Activated naive CD4-positive, alpha-beta T cell treated with anti-CD3 and anti-CD28 coated beads for 36 hours (primary cell): ENCODE measurements at regions of chr12 and their contacts with region 1.

Region 1: DNA sequence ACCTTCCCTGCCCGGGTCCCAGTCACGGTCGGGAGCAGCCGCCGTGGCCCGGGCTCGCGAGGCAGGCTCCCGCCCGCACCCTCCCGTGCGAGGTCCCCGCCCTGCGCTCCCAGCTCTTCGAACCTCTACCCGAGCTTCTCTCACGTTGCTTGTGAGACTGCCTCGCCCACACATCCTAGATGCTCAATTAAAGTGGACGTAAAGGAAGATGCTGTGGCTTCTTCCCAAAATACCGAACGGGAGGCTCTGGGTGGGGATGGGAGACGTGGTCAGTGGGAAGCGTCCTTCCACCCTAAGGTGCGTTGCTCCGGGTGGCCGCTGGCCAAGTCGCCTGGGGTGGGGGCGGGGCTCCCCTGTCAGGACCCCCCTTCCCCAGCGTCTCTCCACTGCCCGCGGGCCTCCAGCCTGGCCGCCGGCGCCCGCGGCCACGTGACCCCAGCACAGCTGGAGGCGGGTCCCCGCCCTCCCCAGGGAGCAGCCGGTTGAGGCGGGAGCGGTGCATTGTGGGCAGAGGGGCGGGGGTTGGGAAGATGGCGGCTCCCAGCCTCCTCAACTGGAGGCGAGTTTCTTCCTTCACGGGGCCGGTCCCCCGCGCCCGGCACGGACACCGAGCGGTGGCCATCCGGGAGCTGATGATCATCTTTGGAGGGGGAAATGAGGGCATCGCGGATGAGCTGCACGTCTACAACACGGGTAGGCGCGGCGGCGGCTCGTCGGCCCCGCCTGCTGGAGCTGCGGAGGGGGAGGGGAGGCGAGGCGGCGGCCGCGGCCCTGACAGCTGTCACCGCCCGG is at the start of gene HCFC2:
- DNase-seq: peak; percentile 91
- H3K4me3 Mint-ChIP-seq: peak within 1 kb of the TSS; percentile 93
- H3K27ac Mint-ChIP-seq: peak within 1 kb of the TSS; percentile 84
- H3K4me1 Mint-ChIP-seq: peaks cover 16% of the 10 kb centered on the region
- H3K27me3 Mint-ChIP-seq: peaks cover 16% of the 10 kb centered on the region
- total RNA-seq, gene HCFC2: 7.4 to 8.3 TPM

Region 2: DNA sequence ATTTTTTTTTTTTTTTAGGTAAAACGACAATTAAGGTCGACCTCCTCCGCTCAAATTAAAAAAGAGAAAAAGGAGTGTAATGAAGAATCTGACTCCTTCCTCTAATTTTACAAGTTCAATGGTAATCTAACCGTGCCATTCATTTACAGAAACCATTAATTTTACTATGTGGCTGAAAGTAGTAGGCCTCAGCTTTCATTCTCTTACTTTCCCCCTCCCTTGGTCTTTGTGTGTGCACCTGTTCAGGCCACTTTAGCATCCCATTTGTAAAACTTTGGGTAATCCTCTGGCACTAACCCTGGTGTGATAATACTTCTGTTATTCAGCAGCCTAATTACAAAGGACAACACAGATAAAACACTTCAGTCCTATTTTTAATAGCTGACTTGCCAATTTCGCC is 978.7 kb before region 1 on chr12:
- CTCF ChIA-PET with region 1: no interaction called
- intact Hi-C with region 1: no loop called
- DNase-seq: no peak
- H3K4me3 Mint-ChIP-seq: no peak overlapping the region
- H3K27ac Mint-ChIP-seq: no peak overlapping the region
- H3K4me1 Mint-ChIP-seq: no peaks in the 10 kb centered on the region
- H3K27me3 Mint-ChIP-seq: no peaks in the 10 kb centered on the region

Region 3: DNA sequence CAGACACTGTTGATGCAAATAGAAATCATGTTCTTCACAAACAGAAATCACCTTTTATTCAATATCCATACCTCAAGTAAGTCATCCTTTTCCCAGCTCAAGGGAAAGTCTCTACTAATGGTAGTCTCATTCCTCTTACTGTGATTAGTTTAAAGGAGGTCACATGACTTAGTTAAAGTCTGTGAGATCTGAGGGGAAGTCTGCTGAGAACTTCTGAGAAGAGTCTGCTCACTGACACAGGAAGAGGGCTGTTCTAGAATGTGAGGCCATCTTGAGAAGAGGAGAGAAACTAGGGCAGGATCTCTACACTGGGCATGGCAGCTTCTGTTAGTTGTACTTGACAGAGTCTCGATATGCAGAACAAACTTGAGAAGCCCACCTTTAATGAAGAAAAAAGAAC is 715.3 kb before region 1 on chr12:
- CTCF ChIA-PET with region 1: no interaction called
- intact Hi-C with region 1: no loop called
- DNase-seq: peak; percentile 12
- H3K4me3 Mint-ChIP-seq: no peak overlapping the region
- H3K27ac Mint-ChIP-seq: no peak overlapping the region
- H3K4me1 Mint-ChIP-seq: peaks cover 6% of the 10 kb centered on the region
- H3K27me3 Mint-ChIP-seq: no peaks in the 10 kb centered on the region

Region 4: GRCh38 chr12:103688376-103689063 is 375.7 kb before region 1 on chr12:
- CTCF ChIA-PET with region 1: no interaction called
- intact Hi-C with region 1: no loop called
- DNase-seq: no peak
- H3K4me3 Mint-ChIP-seq: no peak overlapping the region
- H3K27ac Mint-ChIP-seq: no peak overlapping the region
- H3K4me1 Mint-ChIP-seq: no peaks in the 10 kb centered on the region
- H3K27me3 Mint-ChIP-seq: no peaks in the 10 kb centered on the region

Region 5: GRCh38 chr12:103840876-103841689 is 223.1 kb before region 1 on chr12 and contains the start of gene NT5DC3:
- CTCF ChIA-PET with region 1: no interaction called
- intact Hi-C with region 1: loop called (anchors 1 kb)
- DNase-seq: peak; percentile 82
- H3K4me3 Mint-ChIP-seq: peak within 1 kb of the TSS; percentile 81
- H3K27ac Mint-ChIP-seq: no peak within 1 kb of the TSS
- H3K4me1 Mint-ChIP-seq: peaks cover 21% of the 10 kb centered on the region
- H3K27me3 Mint-ChIP-seq: no peaks in the 10 kb centered on the region
- total RNA-seq, gene NT5DC3: 6.0 to 6.4 TPM

Region 6: GRCh38 chr12:104083769-104084475 is 19.7 kb after region 1 on chr12:
- CTCF ChIA-PET with region 1: interaction called, 3 read pairs
- intact Hi-C with region 1: loop called (anchors 1 kb)
- DNase-seq: peak; percentile 61
- H3K4me3 Mint-ChIP-seq: no peak overlapping the region
- H3K27ac Mint-ChIP-seq: no peak overlapping the region
- H3K4me1 Mint-ChIP-seq: peaks cover 15% of the 10 kb centered on the region
- H3K27me3 Mint-ChIP-seq: no peaks in the 10 kb centered on the region

Region 7: GRCh38 chr12:104137913-104138796 is 73.9 kb after region 1 on chr12 and contains the start of gene NFYB:
- CTCF ChIA-PET with region 1: interaction called, 3 read pairs
- intact Hi-C with region 1: loop called (anchors 1 kb)
- DNase-seq: peak; percentile 95
- H3K4me3 Mint-ChIP-seq: peak within 1 kb of the TSS; percentile 84
- H3K27ac Mint-ChIP-seq: peak within 1 kb of the TSS; percentile 84
- H3K4me1 Mint-ChIP-seq: peaks cover 14% of the 10 kb centered on the region
- H3K27me3 Mint-ChIP-seq: no peaks in the 10 kb centered on the region
- total RNA-seq, gene NFYB: 23.3 to 28.3 TPM

Region 8: GRCh38 chr12:104182144-104182543 is 117.9 kb after region 1 on chr12:
- CTCF ChIA-PET with region 1: no interaction called
- intact Hi-C with region 1: no loop called
- DNase-seq: no peak
- H3K4me3 Mint-ChIP-seq: no peak overlapping the region
- H3K27ac Mint-ChIP-seq: no peak overlapping the region
- H3K4me1 Mint-ChIP-seq: peaks cover 7% of the 10 kb centered on the region
- H3K27me3 Mint-ChIP-seq: no peaks in the 10 kb centered on the region

Region 9: DNA sequence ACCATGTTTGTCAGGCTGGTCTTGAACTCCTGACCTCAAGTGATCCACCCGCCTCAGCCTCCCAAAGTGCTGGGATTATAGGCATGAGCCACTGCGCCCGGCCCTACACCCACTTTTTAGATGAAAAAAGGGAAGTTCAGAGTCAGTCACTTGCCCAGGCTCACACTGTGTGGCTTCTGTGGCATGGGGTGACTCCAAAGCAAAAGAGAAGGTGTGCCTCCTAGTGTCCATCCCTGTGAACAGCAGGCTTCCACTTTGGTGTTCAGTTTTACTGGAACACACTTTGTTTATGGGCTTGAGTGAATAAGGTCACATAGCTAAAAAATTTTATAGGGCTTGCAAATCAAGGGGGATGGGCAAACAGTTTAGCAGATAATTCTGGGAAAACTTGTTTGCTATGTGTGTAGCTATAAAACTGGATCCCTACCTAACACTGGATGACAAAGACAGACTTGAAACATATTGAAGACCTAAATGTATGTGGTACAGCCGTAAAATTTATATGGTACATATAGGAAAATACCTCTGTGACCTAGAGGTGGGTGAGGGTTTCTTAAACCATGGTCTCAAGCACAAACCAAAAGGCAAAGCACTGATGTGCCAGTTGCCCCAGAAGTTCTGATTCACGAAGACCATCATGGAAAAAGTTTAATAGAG is 294.2 kb after region 1 on chr12:
- CTCF ChIA-PET with region 1: no interaction called
- intact Hi-C with region 1: loop called (anchors 5 kb)
- DNase-seq: peak; percentile 86
- H3K4me3 Mint-ChIP-seq: no peak overlapping the region
- H3K27ac Mint-ChIP-seq: no peak overlapping the region
- H3K4me1 Mint-ChIP-seq: no peaks in the 10 kb centered on the region
- H3K27me3 Mint-ChIP-seq: no peaks in the 10 kb centered on the region